Activated CD4-positive, alpha-beta memory T cell treated with anti-CD3 and anti-CD28 coated beads for 36 hours (primary cell): ENCODE measurements at regions of chr17 and their contacts with region 1.

Region 1: GRCh38 chr17:58317421-58318064 is 11.1 kb downstream of the TSPOAP1 start:
- DNase-seq: peak; percentile 89
- H3K4me3 Mint-ChIP-seq: no peak overlapping the region
- H3K27ac Mint-ChIP-seq: peak overlapping the region; percentile 85
- H3K4me1 Mint-ChIP-seq: peaks cover 18% of the 10 kb centered on the region
- H3K27me3 Mint-ChIP-seq: no peaks in the 10 kb centered on the region

Region 2: DNA sequence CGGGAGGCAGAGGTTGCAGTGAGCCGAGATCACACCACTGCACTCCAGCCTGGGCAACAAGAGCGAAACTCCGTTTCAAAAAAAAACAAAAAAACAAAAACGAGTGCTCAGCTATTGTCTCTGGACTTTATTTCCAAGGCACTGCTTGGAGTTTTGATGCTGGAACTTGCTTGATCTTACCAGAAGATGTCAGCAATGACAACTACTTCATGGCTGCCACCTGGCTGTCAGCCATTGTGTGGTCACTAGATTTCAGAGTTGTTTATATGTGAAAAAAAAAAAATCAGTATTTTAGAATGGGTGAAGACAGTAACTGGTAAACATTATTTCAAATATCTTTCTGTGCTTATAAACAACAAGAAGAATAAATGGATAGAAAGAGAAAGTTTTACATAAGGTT is 195.6 kb before region 1 on chr17:
- CTCF ChIA-PET with region 1: no interaction called
- POLR2A ChIA-PET with region 1: no interaction called
- intact Hi-C with region 1: no loop called
- DNase-seq: peak; percentile 29
- H3K4me3 Mint-ChIP-seq: no peak overlapping the region
- H3K27ac Mint-ChIP-seq: no peak overlapping the region
- H3K4me1 Mint-ChIP-seq: peaks cover 6% of the 10 kb centered on the region
- H3K27me3 Mint-ChIP-seq: no peaks in the 10 kb centered on the region

Region 3: DNA sequence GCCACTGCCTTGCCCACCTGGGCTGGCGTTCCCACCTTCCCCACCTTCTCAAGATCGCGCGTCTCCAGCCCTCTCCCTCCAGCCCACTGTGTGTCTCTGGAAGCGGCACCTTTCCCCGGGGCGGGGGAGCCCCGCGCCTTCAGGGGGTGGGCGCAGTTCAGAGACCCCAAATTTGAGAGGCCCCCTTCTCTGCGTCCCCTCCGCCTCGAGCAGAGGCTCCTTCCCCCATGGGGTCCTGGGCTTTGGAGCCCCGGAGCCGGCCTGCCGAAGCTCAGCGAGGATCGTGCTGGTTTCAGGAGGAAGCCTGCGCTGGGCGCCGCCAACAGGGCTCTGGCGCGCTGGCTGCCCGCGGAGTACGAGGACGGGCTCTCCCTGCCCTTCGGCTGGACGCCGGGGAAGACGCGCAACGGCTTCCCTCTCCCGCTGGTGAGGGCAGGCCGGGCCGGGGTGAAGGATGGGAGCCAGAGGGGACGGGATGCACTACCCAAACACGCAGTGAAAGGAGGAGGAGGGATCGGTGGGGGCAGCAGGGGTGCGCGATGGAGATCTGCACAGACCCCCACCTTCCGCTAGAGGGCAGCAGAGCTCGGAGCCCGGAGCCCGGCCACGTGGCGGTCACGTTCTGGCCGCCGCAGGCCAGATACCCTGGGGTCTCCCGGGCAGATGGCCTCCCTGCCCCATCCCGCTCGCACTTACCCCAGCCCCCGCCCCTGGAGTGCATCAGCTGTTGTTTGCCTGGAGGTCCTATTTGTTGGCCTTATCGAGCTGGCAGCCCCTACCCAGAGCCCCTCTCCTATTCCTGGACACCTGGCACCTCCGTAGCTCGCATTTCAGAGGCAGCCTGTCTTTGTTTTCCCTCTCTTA is 68.0 kb before region 1 on chr17:
- CTCF ChIA-PET with region 1: interaction called, 20 read pairs
- POLR2A ChIA-PET with region 1: no interaction called
- intact Hi-C with region 1: no loop called
- DNase-seq: peak; percentile 83
- H3K4me3 Mint-ChIP-seq: peak overlapping the region; percentile 70
- H3K27ac Mint-ChIP-seq: no peak overlapping the region
- H3K4me1 Mint-ChIP-seq: peaks cover 13% of the 10 kb centered on the region
- H3K27me3 Mint-ChIP-seq: peaks cover 18% of the 10 kb centered on the region

Region 4: DNA sequence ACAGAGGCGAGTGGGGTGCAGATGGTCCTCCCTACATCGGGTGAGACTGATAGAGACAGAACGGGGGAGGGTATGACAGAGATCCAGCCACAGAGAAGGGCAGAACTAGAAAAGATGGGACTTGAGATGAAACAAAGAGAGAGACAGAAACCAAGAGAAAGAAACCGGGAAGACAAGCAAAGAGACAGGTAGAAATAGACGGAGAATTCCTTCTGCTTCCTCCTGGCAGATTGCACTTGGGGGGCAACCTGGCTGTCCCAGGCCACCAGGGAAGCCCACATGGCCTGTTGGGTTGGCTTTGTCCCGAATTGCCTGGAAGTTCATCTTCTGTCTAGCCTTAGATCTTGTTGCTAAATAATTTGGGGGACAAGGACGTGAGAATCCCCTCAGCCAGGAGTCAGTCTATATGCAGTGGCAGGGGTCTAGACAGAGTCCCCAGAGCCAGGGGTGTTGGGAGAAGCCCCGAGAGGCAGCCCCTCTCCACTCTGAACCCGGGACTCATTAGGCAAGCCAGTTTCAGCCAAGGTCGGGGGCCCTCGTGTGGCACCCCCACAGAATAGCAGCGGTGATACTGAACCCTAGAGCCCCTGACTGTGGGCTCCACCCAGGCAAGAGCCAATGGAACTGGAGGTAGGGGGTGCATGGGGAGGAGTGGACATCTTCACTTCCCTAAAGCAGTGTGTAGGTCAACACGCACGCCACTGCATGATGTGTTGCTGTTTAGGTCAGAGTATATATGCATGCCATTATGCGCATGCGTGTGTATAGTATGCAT is 11.7 kb after region 1 on chr17:
- CTCF ChIA-PET with region 1: interaction called, 52 read pairs
- POLR2A ChIA-PET with region 1: interaction called, 1,114 read pairs
- intact Hi-C with region 1: loop called (anchors 1 kb)
- DNase-seq: peak; percentile 92
- H3K4me3 Mint-ChIP-seq: peak overlapping the region; percentile 92
- H3K27ac Mint-ChIP-seq: peak overlapping the region; percentile 98
- H3K4me1 Mint-ChIP-seq: peaks cover 44% of the 10 kb centered on the region
- H3K27me3 Mint-ChIP-seq: peaks cover 25% of the 10 kb centered on the region

Region 5: DNA sequence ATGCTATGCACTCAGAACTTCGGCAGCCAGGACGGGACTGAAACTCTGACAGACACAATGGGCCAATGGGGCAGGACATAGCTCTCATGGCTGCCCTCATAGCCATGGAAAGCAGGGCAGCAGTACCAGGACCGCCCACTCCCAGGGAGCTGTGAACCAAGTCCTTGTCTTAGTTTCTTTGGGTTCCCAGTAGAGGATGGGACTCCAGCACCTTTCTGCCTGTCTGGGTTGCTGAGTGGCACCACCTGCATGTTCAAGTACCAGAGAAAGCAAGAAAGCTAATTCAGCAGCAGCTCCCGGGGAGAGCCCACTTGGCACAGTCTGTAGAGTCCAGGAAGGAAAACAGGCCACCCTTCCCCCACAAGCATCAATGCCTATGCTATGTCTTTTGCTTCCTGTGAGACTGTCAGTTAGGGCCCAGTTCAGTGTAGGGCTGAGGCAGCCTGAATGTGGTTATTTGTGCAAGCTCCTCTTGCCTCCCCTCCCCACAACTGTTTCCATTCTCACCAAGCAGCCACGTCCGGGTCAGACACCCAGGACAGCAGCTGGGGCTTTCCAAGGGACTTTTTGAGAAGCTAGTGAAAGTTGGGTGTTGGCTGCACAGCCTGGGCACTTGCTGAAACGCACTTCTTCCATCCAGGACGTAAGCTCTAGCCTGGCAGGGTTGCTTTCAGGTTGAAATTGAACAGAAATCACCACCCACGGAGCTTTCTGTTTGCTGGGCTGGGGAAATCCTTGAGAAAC is 26.7 kb after region 1 on chr17:
- CTCF ChIA-PET with region 1: interaction called, 113 read pairs
- POLR2A ChIA-PET with region 1: interaction called, 1,114 read pairs
- intact Hi-C with region 1: loop called (anchors 1 kb)
- DNase-seq: peak; percentile 97
- H3K4me3 Mint-ChIP-seq: peak overlapping the region; percentile 92
- H3K27ac Mint-ChIP-seq: peak overlapping the region; percentile 98
- H3K4me1 Mint-ChIP-seq: peaks cover 56% of the 10 kb centered on the region
- H3K27me3 Mint-ChIP-seq: no peaks in the 10 kb centered on the region

Region 6: GRCh38 chr17:58417300-58418092 is 100.0 kb after region 1 on chr17 and contains the start of gene RNF43:
- CTCF ChIA-PET with region 1: interaction called, 133 read pairs
- POLR2A ChIA-PET with region 1: interaction called, 16 read pairs
- intact Hi-C with region 1: loop called (anchors 1 kb)
- DNase-seq: peak; percentile 93
- H3K4me3 Mint-ChIP-seq: peak within 1 kb of the TSS; percentile 24
- H3K27ac Mint-ChIP-seq: peak within 1 kb of the TSS; percentile 24
- H3K4me1 Mint-ChIP-seq: peaks cover 24% of the 10 kb centered on the region
- H3K27me3 Mint-ChIP-seq: no peaks in the 10 kb centered on the region
- total RNA-seq, gene RNF43: 0.39 to 0.93 TPM

Region 7: DNA sequence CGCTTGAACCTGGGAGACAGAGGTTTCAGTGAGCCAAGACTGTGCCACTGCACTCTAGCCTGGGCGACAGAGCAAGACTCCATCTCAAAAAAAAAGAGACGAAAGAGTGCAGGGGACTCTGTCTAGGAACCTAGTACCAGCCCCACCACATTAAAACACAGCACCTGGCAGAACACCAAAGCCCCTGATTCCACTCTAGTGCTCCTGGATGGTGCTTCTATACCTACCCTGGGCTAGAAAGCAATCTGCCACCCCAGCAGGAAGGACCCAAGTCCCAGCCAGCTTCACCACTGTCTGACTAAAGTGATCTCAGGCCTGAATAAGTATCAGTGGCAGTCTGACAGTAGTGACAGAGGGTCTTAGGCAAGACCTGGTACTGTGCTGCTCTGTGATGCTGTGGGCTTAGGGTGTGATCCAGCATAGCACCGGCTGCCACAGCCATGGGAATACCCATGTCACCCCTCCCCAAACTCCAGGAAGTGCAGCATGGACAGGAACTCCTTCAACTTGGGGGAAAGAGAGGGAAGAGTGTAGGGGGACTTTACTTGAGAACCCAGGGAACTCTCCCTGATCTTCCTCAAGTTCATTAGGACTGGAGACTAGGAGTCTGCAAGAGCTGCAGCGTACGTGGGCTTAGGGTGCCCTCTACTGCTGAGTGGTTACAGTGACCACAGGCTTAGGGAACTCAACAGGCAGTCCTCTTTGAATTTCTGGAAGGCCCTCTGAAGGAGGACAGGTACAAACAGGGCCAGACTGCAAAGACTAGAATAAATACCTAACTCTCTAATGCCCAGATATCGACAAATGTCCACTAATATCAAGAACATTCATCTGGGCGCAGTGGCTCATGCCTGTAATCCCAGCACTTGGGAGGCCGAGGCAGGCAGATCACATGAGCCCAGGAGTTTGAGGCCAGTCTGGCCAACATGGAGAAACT is 129.8 kb after region 1 on chr17:
- CTCF ChIA-PET with region 1: interaction called, 76 read pairs
- POLR2A ChIA-PET with region 1: no interaction called
- intact Hi-C with region 1: loop called (anchors 1 kb)
- DNase-seq: peak; percentile 83
- H3K4me3 Mint-ChIP-seq: no peak overlapping the region
- H3K27ac Mint-ChIP-seq: no peak overlapping the region
- H3K4me1 Mint-ChIP-seq: peaks cover 9% of the 10 kb centered on the region
- H3K27me3 Mint-ChIP-seq: no peaks in the 10 kb centered on the region

Region 8: GRCh38 chr17:58517734-58518609 is 200.4 kb after region 1 on chr17:
- CTCF ChIA-PET with region 1: interaction called, 9 read pairs
- POLR2A ChIA-PET with region 1: no interaction called
- intact Hi-C with region 1: loop called (anchors 1 kb)
- DNase-seq: peak; percentile 100
- H3K4me3 Mint-ChIP-seq: peak overlapping the region; percentile 91
- H3K27ac Mint-ChIP-seq: peak overlapping the region; percentile 95
- H3K4me1 Mint-ChIP-seq: peaks cover 32% of the 10 kb centered on the region
- H3K27me3 Mint-ChIP-seq: no peaks in the 10 kb centered on the region

Region 9: DNA sequence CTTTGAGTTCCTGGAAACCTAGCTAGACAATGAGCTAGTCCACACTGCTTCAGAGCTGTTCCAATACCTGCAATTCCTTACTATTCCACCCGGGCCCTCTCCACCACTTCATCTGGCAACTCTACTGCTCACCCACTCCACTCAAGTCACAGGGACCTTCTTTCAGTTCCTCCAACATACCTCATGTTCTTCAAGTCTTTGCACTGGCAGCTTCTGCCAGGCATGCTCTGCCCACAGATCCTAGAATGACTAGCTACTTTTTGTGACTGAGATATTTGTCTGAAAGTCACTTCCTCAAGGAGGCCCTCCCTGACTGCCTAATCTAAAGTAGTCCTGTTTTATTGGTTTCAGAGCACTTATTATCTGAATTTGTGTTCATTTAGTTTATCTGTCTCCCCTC is 287.9 kb after region 1 on chr17:
- CTCF ChIA-PET with region 1: no interaction called
- POLR2A ChIA-PET with region 1: no interaction called
- intact Hi-C with region 1: no loop called
- DNase-seq: peak; percentile 45
- H3K4me3 Mint-ChIP-seq: no peak overlapping the region
- H3K27ac Mint-ChIP-seq: peak overlapping the region; percentile 30
- H3K4me1 Mint-ChIP-seq: peaks cover 8% of the 10 kb centered on the region
- H3K27me3 Mint-ChIP-seq: no peaks in the 10 kb centered on the region

Region 10: DNA sequence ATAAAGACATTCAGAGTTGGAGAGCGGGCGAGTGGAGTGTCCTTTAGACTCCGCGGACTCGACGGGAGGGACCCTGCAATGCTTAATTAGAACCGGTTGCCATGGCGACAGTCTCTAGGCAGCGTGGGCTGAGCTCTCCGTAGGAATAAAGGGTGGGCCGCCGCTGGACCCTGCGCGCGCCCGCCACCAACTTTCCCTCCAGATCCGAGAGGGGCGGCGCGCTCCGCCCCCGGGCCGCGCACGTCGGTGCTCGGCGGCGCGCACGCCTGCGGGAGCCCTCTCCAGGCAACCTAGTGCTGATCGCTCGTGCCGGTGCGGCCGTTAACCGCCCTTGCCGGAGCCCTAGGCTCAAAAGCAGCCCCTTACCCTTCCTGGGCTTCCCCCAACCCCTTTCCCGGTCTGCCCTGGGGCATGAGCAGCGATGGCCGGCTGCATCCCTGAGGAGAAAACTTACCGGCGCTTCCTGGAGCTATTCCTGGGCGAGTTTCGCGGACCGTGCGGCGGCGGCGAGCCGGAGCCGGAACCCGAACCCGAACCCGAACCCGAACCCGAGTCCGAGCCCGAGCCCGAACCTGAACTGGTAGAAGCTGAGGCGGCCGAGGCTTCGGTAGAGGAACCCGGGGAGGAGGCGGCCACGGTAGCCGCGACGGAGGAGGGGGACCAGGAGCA is 438.2 kb after region 1 on chr17 and contains the start of gene PPM1E:
- CTCF ChIA-PET with region 1: no interaction called
- POLR2A ChIA-PET with region 1: no interaction called
- intact Hi-C with region 1: no loop called
- DNase-seq: peak; percentile 59
- H3K4me3 Mint-ChIP-seq: peak within 1 kb of the TSS; percentile 82
- H3K27ac Mint-ChIP-seq: no peak within 1 kb of the TSS
- H3K4me1 Mint-ChIP-seq: peaks cover 10% of the 10 kb centered on the region
- H3K27me3 Mint-ChIP-seq: peaks cover 44% of the 10 kb centered on the region
- total RNA-seq, gene PPM1E: 0.02 TPM in 1 of 2 experiments, not detected in the other